PC-9 (cell line): ENCODE measurements at regions of chr6 and their contacts with region 1.

Region 1: GRCh38 chr6:4665489-4666417 is 110.5 kb upstream of the CDYL start:
- DNase-seq: no peak
- H3K4me3 ChIP-seq: no peak overlapping the region
- H3K27ac ChIP-seq: no peak overlapping the region
- H3K4me1 ChIP-seq: no peaks in the 10 kb centered on the region
- H3K27me3 ChIP-seq: no peaks in the 10 kb centered on the region
- CTCF ChIP-seq: no peak

Region 2: GRCh38 chr6:4281341-4282293 is 384.1 kb before region 1 on chr6:
- CTCF ChIA-PET with region 1: no interaction called
- POLR2A ChIA-PET with region 1: no interaction called
- intact Hi-C with region 1: no loop called
- DNase-seq: peak; percentile 70 to 80
- H3K4me3 ChIP-seq: peak overlapping the region; percentile 54
- H3K27ac ChIP-seq: no peak overlapping the region
- H3K4me1 ChIP-seq: peaks cover 17% of the 10 kb centered on the region
- H3K27me3 ChIP-seq: no peaks in the 10 kb centered on the region
- CTCF ChIP-seq: peak; percentile 51

Region 3: GRCh38 chr6:4717124-4717523 is 51.4 kb after region 1 on chr6:
- CTCF ChIA-PET with region 1: no interaction called
- POLR2A ChIA-PET with region 1: interaction called, 11 read pairs
- intact Hi-C with region 1: no loop called
- DNase-seq: no peak
- H3K4me3 ChIP-seq: no peak overlapping the region
- H3K27ac ChIP-seq: no peak overlapping the region
- H3K4me1 ChIP-seq: no peaks in the 10 kb centered on the region
- H3K27me3 ChIP-seq: no peaks in the 10 kb centered on the region
- CTCF ChIP-seq: no peak